IMR-90 (cell line): ENCODE measurements at regions of chr17 and their contacts with region 1.

Region 1: DNA sequence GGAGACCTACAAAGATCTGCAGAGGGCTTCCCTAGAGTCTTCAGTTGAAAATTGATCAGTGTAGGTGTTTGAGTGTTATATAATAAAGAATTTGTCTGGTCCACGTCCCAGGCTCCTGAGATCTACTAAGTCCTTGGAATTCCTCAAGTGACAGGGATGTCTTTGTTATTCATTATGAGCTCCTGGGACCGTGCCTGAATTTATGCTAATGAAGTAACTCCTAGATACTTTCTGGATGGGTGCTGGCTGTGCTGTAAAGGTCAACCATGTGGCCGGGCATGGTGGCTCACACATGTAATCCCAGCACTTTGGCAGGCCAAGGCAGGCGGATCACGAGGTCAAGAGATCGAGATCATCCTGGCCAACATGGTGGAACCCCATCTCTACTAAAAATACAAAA is 43.7 kb downstream of the CDC27 start:
- DNase-seq: no peak
- ATAC-seq: no peak
- H3K4me3 ChIP-seq: no peak overlapping the region
- H3K27ac ChIP-seq: no peak overlapping the region
- H3K4me1 ChIP-seq: no peaks in the 10 kb centered on the region
- H3K27me3 ChIP-seq: no peaks in the 10 kb centered on the region
- CTCF ChIP-seq: no peak
- POLR2A ChIP-seq: no peak
- RAD21 ChIP-seq: no peak

Region 2: DNA sequence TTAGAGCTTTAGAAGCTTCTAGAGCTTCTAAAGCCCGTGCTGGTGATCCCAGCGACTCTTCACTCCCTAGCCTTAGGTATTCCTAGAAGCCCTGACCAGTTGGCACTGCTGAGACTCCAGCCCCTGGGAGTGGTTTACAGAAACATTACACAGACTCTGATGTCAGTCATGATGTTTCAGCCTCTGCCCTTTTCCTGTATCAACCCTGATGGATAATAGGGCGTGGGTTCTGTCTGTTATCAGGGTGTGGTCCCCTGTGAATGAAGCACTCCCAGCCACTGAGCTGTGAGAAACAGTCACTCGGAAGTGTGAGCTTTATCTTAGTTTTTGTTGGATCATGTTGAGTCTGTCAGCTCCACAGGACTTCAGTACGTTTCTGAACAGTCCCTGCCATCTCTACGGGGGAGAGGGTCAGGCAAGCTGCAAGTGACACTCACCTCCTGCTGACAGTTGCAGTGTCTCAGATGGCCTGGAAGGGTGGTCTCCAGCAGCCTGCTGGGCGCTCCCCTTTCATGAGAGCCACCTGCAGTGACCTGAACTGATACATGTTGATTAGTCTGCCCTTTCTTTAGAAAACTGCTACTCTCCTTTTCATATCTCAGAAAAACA is 209.6 kb before region 1 on chr17:
- CTCF ChIA-PET with region 1: no interaction called
- POLR2A ChIA-PET with region 1: no interaction called
- dilution Hi-C with region 1: no loop called
- in situ Hi-C with region 1: no loop called
- intact Hi-C with region 1: loop called (anchors 10 kb)
- DNase-seq: no peak
- ATAC-seq: no peak
- H3K4me3 ChIP-seq: no peak overlapping the region
- H3K27ac ChIP-seq: no peak overlapping the region
- H3K4me1 ChIP-seq: no peaks in the 10 kb centered on the region
- H3K27me3 ChIP-seq: no peaks in the 10 kb centered on the region
- CTCF ChIP-seq: no peak
- POLR2A ChIP-seq: no peak
- RAD21 ChIP-seq: no peak

Region 3: GRCh38 chr17:47172698-47173565 is 27.6 kb after region 1 on chr17:
- CTCF ChIA-PET with region 1: no interaction called
- POLR2A ChIA-PET with region 1: no interaction called
- dilution Hi-C with region 1: no loop called
- in situ Hi-C with region 1: no loop called
- intact Hi-C with region 1: no loop called
- DNase-seq: no peak
- ATAC-seq: no peak
- H3K4me3 ChIP-seq: no peak overlapping the region
- H3K27ac ChIP-seq: no peak overlapping the region
- H3K4me1 ChIP-seq: peaks cover 2% of the 10 kb centered on the region; the same call in 1 of the 2 replicates
- H3K27me3 ChIP-seq: no peaks in the 10 kb centered on the region
- CTCF ChIP-seq: no peak
- POLR2A ChIP-seq: no peak
- RAD21 ChIP-seq: no peak